ENCODE measurements at regions of chr2 and their contacts with region 1.

Region 1: GRCh38 chr2:240051697-240052096 is 1.6 kb downstream of the OR6B3 start:
- DNase-seq: no peak
- H3K4me3 ChIP-seq: no peak overlapping the region
- H3K27ac ChIP-seq: no peak overlapping the region
- H3K4me1 ChIP-seq: no peaks in the 10 kb centered on the region
- H3K27me3 ChIP-seq: peaks cover 4 to 37% of the 10 kb centered on the region in 2 donors
- CTCF ChIP-seq: no peak
- POLR2A ChIP-seq: no peak

Region 2: DNA sequence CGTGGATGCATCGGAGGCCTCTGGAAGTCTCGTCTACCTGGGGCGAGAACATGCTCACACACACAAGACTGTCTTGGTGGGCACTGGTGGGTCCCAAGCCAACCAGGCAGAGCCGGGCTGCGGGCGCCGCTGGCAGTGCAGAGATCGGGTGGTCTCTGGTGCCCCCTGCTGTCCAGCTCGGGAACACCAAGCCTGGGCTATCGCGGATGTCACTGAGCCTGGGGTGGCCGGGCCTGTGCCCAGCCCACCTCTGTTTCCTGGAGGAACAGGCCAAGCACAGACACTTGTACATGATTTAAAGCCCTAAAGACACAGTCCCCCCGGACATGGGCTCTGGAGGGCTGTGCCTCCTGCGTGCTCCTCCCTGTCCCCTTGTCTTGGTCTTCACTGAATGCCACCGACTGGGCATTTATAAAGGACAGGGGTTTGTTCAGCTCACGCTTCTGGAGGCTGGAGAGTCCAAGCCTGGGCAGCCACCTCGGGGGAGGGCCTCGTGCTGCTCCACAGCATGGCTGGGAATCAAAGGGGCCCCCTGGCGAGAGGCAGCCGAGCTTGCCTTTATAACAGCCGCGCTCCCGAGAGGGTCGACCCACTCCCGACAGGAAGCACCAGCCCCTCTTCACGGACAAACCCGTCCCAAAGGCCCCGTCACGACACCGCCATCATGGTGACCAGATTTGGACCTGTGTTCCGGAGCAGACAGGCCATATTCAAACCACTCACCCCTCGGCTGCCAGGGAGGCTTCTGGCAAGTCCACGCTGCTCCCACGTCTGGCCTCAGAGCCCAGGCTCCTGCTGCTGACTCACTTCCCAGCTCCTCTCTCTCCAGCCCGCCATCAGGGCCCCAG is 92.3 kb after region 1 on chr2:
- intact Hi-C with region 1: loop called (anchors 10 kb)
- DNase-seq: peak; percentile 36 to 70
- H3K4me3 ChIP-seq: peak overlapping the region in 2 of 3 donors; percentile 7 to 24
- H3K27ac ChIP-seq: no peak overlapping the region
- H3K4me1 ChIP-seq: no peaks in the 10 kb centered on the region
- H3K27me3 ChIP-seq: peaks cover 0 to 2% of the 10 kb centered on the region in 2 donors
- CTCF ChIP-seq: peak; percentile 88 to 96 (median 91)
- POLR2A ChIP-seq: no peak

Measured in breast epithelium (tissue), 4 donors.